ENCODE measurements at regions of chr9 and their contacts with region 1.

Region 1: DNA sequence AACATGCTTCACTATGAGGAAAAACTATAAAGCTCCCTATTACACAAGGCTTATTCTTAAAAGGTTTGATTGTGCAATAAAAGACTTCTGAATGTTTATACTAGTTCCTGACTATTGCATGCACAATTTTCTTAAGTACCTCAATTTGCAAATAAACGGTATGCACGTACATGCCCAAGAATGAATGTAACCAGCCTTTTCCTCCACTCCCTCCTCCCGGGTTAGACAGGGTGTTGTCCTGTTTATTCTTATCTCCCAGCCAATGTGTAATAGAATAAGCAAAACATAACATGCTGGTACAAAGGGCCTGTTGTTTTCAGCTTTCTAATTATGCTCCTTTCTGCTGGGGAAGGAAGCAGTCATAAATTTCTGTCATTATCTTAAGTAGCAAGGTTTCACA is 79.1 kb downstream of the AOPEP start:
- DNase-seq: peak; percentile 31
- ATAC-seq: 0 out of 3 replicates have a peak, but pooled peaks have one; percentile 2
- H3K4me3 ChIP-seq: peak overlapping the region; percentile 4; the same call in 1 of the 2 replicates
- H3K27ac ChIP-seq: peak overlapping the region; percentile 81
- H3K4me1 ChIP-seq: peaks cover 66% of the 10 kb centered on the region
- H3K27me3 ChIP-seq: no peaks in the 10 kb centered on the region
- CTCF ChIP-seq: no peak
- EP300 ChIP-seq: no peak
- POLR2A ChIP-seq: no peak
- RAD21 ChIP-seq: no peak

Region 2: GRCh38 chr9:94563548-94563947 is 242.0 kb before region 1 on chr9:
- CTCF ChIA-PET with region 1: no interaction called
- POLR2A ChIA-PET with region 1: no interaction called
- RAD21 ChIA-PET with region 1: no interaction called
- SMC1A ChIA-PET with region 1: no interaction called
- in situ Hi-C with region 1: no loop called
- intact Hi-C with region 1: no loop called
- DNase-seq: no peak
- ATAC-seq: no peak
- H3K4me3 ChIP-seq: no peak overlapping the region
- H3K27ac ChIP-seq: no peak overlapping the region
- H3K4me1 ChIP-seq: no peaks in the 10 kb centered on the region
- H3K27me3 ChIP-seq: peaks cover 0 to 4% of the 10 kb centered on the region in 2 experiments; a peak in 1 of 4 replicates
- CTCF ChIP-seq: 0 out of 6 replicates have a peak, but pooled peaks of 1 of the 3 experiments have one; percentile 19
- EP300 ChIP-seq: no peak
- POLR2A ChIP-seq: no peak
- RAD21 ChIP-seq: no peak

Region 3: DNA sequence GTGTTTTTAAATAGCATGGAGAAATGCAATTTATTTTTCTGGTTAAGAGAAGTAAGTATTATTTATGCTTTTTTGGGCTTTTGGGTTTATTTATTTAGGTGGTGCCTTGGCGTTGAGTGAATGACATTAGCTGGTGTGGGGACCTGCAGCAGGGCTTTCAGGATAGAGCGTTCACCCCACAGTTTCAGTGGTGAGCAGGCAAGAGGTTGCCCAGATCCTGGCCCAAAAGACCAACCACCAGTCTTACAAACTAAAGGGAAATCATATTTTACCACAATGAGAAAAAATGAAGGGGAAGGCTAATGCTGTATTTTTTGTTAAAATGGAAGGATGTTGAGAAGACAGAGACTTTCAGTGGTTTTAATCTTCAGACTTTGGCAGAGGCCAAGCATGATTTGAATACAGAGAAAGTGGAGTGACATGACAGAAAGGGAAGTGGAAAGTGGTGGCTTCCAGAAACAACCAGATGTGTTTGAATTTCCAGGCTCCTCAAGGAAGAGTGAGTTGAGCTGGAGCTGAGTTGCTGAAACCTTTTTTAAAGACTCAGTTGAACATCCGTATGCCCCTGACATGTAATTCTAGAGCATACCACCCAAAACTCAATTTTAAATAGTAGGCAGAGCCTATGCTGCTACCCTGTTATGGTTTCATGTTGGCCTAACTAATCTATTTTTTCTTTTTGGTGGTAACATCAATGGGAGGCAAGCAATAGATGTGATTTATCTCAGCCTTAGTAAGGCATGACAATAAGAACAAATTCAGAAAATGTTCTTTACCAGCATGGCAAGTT is 15.7 kb after region 1 on chr9:
- CTCF ChIA-PET with region 1: interaction called, 6 read pairs
- POLR2A ChIA-PET with region 1: interaction called, 7 read pairs
- RAD21 ChIA-PET with region 1: interaction called, 6 read pairs
- SMC1A ChIA-PET with region 1: interaction called, 16 read pairs
- in situ Hi-C with region 1: no loop called
- intact Hi-C with region 1: no loop called
- DNase-seq: peak; percentile 59
- ATAC-seq: peak; percentile 94
- H3K4me3 ChIP-seq: no peak overlapping the region
- H3K27ac ChIP-seq: peak overlapping the region; percentile 56
- H3K4me1 ChIP-seq: peaks cover 11% of the 10 kb centered on the region
- H3K27me3 ChIP-seq: no peaks in the 10 kb centered on the region
- CTCF ChIP-seq: no peak
- EP300 ChIP-seq: peak in 1 of 2 experiments; percentile 23; a peak in 2 of 4 replicates
- POLR2A ChIP-seq: no peak
- RAD21 ChIP-seq: no peak

Region 4: GRCh38 chr9:94860968-94861871 is 55.6 kb after region 1 on chr9:
- CTCF ChIA-PET with region 1: interaction called, 13 read pairs
- POLR2A ChIA-PET with region 1: interaction called, 5 read pairs
- RAD21 ChIA-PET with region 1: interaction called, 22 read pairs
- SMC1A ChIA-PET with region 1: interaction called, 22 read pairs
- in situ Hi-C with region 1: no loop called
- intact Hi-C with region 1: loop called (anchors 2 kb)
- DNase-seq: peak; percentile 92
- ATAC-seq: peak; percentile 93
- H3K4me3 ChIP-seq: 0 out of 2 replicates have a peak overlapping the region, but pooled peaks have one; percentile 30
- H3K27ac ChIP-seq: peak overlapping the region; percentile 92
- H3K4me1 ChIP-seq: peaks cover 26% of the 10 kb centered on the region
- H3K27me3 ChIP-seq: no peaks in the 10 kb centered on the region
- CTCF ChIP-seq: no peak
- EP300 ChIP-seq: peak; percentile 97 to 99
- POLR2A ChIP-seq: peak; percentile 55; the same call in 1 of the 2 replicates
- RAD21 ChIP-seq: peak; percentile 25

Region 5: GRCh38 chr9:94875300-94876020 is 69.9 kb after region 1 on chr9:
- CTCF ChIA-PET with region 1: interaction called, 4 read pairs
- POLR2A ChIA-PET with region 1: no interaction called
- RAD21 ChIA-PET with region 1: interaction called, 3 read pairs
- SMC1A ChIA-PET with region 1: interaction called, 17 read pairs
- in situ Hi-C with region 1: no loop called
- intact Hi-C with region 1: loop called (anchors 1 kb)
- DNase-seq: peak; percentile 52
- ATAC-seq: peak; percentile 96
- H3K4me3 ChIP-seq: peak overlapping the region; percentile 23; the same call in 1 of the 2 replicates
- H3K27ac ChIP-seq: peak overlapping the region; percentile 90
- H3K4me1 ChIP-seq: peaks cover 17% of the 10 kb centered on the region
- H3K27me3 ChIP-seq: no peaks in the 10 kb centered on the region
- CTCF ChIP-seq: no peak
- EP300 ChIP-seq: 0 out of 4 replicates have a peak, but pooled peaks of 1 of the 2 experiments have one; percentile 34
- POLR2A ChIP-seq: no peak
- RAD21 ChIP-seq: no peak